PC-9 (cell line): ENCODE measurements at regions of chr1 and their contacts with region 1.

Region 1: DNA sequence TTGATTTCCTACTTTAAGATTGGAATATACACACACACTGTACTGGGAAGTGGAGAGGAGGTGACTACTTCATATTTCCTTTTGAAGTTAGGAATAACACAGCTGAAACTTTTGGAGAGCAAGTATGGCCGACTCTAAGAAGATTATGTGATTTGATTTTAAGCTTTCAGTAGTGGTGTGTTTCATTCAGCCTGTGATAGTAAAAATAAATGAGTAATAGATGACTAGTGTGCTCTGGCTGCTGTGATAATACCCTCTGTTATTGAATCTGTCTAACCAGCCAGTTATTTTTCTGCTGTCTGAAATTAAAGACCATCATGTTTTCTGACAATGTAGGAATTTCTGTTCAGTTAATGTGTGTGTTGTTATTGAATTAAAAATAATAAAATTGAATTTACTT is 48.3 kb downstream of the CTTNBP2NL start:
- DNase-seq: no peak
- H3K4me3 ChIP-seq: no peak overlapping the region
- H3K27ac ChIP-seq: no peak overlapping the region
- H3K4me1 ChIP-seq: no peaks in the 10 kb centered on the region
- H3K27me3 ChIP-seq: no peaks in the 10 kb centered on the region
- CTCF ChIP-seq: no peak

Region 2: DNA sequence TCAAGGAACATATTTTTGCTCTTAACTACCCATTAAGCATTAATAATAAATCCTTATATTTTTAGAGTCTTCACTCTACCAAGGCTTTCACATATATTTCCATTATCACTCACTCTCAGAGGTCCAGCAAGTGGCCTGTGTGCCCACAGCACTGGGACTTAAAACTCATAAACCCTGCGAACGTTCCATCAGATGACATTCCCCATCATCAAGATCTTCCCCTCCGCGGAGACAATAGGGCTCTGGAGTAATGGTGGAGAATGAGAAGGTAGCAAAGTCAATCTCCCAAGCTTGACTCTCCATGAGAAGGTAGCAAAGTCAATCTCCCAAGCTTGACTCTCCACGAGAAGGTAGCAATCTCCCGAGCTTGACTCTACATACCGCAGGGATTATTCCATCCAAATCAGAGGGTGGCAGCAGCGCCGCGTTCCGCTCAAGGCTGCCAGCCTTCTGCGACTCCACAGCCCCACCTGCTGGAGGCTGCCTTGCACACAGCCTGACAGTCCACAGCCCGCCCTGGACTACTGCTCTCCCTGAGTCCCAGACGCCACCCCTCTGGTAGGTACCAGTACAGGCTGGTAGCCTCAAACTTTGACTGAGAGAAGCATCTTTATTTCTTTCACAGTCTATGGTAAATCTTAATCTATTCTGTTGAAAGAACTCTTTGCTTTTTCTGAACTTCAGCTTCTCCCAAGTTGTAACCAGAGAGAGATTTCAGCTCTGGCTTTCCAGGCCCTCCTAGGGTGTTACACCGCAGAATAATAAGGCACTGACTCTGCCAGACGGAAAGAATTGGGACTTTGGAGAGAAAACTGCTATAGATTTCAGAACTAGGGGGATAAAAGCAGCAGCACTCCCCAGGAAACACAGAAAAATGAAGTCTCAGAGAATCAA is 74.6 kb before region 1 on chr1:
- CTCF ChIA-PET with region 1: interaction called, 11 read pairs
- POLR2A ChIA-PET with region 1: no interaction called
- intact Hi-C with region 1: no loop called
- DNase-seq: peak; percentile 67 to 88
- H3K4me3 ChIP-seq: no peak overlapping the region
- H3K27ac ChIP-seq: no peak overlapping the region
- H3K4me1 ChIP-seq: no peaks in the 10 kb centered on the region
- H3K27me3 ChIP-seq: peaks cover 55% of the 10 kb centered on the region
- CTCF ChIP-seq: peak; percentile 99

Region 3: GRCh38 chr1:112508278-112509004 is 64.2 kb after region 1 on chr1 and contains the start of gene WNT2B:
- CTCF ChIA-PET with region 1: no interaction called
- POLR2A ChIA-PET with region 1: no interaction called
- intact Hi-C with region 1: no loop called
- DNase-seq: peak in 1 of 2 experiments; percentile 26
- H3K4me3 ChIP-seq: peak within 1 kb of the TSS; percentile 71
- H3K27ac ChIP-seq: no peak within 1 kb of the TSS
- H3K4me1 ChIP-seq: 0 out of 2 replicates have a peak, but pooled peaks cover 10% of the 10 kb centered on the region
- H3K27me3 ChIP-seq: peaks cover 11% of the 10 kb centered on the region; the same call in 1 of the 2 replicates
- CTCF ChIP-seq: no peak; the same call in 1 of the 2 replicates
- total RNA-seq, gene WNT2B: 0.98 and 1.1 TPM in 2 replicates